Tibial artery (tissue), 4 donors: ENCODE measurements at regions of chr1 and their contacts with region 1.

Region 1: DNA sequence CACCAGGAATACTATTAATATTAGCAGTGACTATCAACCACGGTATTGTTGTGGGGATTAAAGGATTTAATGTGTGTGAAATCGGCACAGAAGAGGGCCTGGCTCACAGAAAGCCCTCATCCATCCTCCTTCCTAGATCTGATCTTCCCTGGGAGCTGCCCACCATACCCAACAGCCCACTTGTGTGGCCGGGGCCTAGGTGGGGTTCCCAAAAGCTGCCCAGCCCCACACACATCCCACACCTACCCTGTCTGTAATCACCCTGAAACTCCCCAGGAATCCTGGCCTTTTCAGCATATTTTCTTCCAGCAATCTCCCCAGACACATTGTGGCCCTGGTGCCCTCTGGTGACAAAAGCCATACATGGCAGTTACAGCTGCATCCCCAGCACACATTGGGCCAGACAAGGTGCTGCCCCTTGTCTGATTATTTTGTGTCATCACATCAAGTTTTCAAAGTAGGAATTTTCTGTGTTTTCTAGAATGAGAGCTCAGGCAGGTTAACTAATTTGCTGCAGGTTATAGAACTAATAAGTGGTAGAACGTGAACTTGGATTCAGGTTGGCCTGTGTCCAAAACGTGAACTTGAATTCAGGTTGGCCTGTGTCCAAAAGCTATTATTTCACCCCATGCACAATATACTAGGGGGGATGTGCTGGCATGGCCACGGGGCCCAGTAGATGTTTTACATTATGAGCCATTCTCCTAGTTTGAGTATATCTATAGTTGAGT is 5.3 kb upstream of the SLC6A9 start:
- DNase-seq: peak; percentile 67 to 79
- H3K4me3 ChIP-seq: no peak overlapping the region
- H3K27ac ChIP-seq: peak overlapping the region; percentile 71 to 76
- H3K4me1 ChIP-seq: peaks cover 9 to 37% (median 29%) of the 10 kb centered on the region in 4 donors
- H3K27me3 ChIP-seq: no peaks in the 10 kb centered on the region
- CTCF ChIP-seq: peak; percentile 80 to 90

Region 2: DNA sequence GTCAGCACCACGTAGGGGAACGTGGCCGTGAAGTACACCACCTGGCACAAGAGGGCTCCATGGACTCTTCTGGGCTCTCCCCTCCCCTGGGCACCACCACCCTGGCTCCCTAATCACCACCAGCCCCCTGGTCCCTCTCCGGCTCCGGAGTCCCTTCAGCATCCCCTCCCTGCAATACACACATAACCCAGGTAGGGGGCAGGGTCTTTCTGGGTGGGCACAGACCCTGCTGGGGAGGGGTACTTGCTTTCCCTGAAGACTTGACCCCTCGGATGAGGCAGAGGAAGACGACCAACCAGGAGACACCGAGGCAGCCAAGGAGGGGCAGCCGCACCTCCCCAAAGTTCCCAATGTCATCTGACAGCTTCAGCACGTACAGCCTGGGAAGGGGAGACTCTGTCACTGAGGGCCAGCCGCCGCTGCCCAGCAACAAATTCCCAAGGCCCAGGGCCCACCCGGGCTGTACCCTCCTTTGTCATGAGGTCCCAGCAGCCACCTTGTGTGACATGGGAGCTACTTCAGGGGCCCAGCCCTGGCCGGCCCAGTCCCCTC is 33.9 kb before region 1 on chr1:
- intact Hi-C with region 1: loop called (anchors 5 kb)
- DNase-seq: no peak
- H3K4me3 ChIP-seq: no peak overlapping the region
- H3K27ac ChIP-seq: no peak overlapping the region
- H3K4me1 ChIP-seq: peaks cover 0 to 5% (median 4%) of the 10 kb centered on the region in 4 donors
- H3K27me3 ChIP-seq: no peaks in the 10 kb centered on the region
- CTCF ChIP-seq: no peak